SK-N-SH (cell line): ENCODE measurements at regions of chr11 and their contacts with region 1.

Region 1: DNA sequence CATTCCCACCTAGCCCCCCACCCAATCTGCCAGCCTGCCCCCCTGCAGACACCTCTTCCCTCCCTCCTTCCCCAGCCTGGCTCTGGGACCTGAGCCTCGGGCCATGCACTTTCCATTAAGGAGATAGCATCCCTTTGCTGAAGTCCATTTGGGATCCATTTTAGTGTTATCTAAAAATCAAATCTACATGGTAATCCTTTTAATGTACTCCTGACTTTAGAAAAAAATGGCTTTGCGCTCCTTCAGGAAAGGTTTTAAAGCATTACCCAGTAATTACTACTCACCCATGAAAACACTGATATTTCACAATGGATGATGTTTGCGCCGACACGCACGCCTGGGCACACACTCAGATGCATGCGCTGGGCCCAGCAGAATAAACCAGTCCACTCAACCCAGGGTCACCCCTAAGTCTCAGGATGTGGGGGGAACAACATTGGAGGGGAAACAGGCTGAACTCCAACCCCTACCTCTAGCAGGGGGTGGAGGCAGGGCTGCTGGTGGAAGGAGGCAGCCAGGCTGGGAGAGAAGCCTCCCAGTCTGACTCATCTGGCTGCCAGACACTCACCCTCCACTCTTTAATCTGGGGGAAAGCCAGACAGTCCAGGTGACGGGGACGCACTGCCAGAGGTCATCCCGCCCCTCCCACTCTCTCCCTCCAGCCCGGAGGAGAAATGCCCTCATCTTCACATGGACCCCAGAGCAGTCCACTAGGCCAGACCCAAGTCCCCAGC is 29.8 kb downstream of the LMO1 start:
- DNase-seq: peak; percentile 78
- H3K4me3 ChIP-seq: peak overlapping the region in 1 of 2 experiments; percentile 0; a peak in 1 of 4 replicates
- H3K27ac ChIP-seq: peak overlapping the region; percentile 21 to 96; a peak in 3 of 4 replicates
- H3K4me1 ChIP-seq: peaks cover 0 to 92% of the 10 kb centered on the region in 2 experiments; a peak in 2 of 4 replicates
- H3K27me3 ChIP-seq: no peaks in the 10 kb centered on the region
- CTCF ChIP-seq: no peak
- EP300 ChIP-seq: peak; percentile 8 to 98; a peak in 2 of 4 replicates
- RAD21 ChIP-seq: no peak

Region 2: GRCh38 chr11:8156877-8157276 is 77.0 kb before region 1 on chr11:
- CTCF ChIA-PET with region 1: no interaction called
- POLR2A ChIA-PET with region 1: no interaction called
- DNase-seq: no peak
- H3K4me3 ChIP-seq: no peak overlapping the region
- H3K27ac ChIP-seq: no peak overlapping the region
- H3K4me1 ChIP-seq: no peaks in the 10 kb centered on the region
- H3K27me3 ChIP-seq: no peaks in the 10 kb centered on the region
- CTCF ChIP-seq: no peak
- EP300 ChIP-seq: no peak
- RAD21 ChIP-seq: no peak

Region 3: GRCh38 chr11:8247312-8247711 is 13.5 kb after region 1 on chr11:
- CTCF ChIA-PET with region 1: interaction called, 604 read pairs
- POLR2A ChIA-PET with region 1: interaction called, 87 read pairs
- DNase-seq: no peak
- H3K4me3 ChIP-seq: no peak overlapping the region
- H3K27ac ChIP-seq: peak overlapping the region in 1 of 2 experiments; percentile 55; a peak in 1 of 4 replicates
- H3K4me1 ChIP-seq: peaks cover 0 to 75% of the 10 kb centered on the region in 2 experiments; a peak in 2 of 4 replicates
- H3K27me3 ChIP-seq: peaks cover 6% of the 10 kb centered on the region; the same call in 1 of the 2 replicates
- CTCF ChIP-seq: peak; percentile 34; the same call in 1 of the 2 replicates
- EP300 ChIP-seq: no peak
- RAD21 ChIP-seq: 0 out of 2 replicates have a peak, but pooled peaks have one; percentile 20

Region 4: DNA sequence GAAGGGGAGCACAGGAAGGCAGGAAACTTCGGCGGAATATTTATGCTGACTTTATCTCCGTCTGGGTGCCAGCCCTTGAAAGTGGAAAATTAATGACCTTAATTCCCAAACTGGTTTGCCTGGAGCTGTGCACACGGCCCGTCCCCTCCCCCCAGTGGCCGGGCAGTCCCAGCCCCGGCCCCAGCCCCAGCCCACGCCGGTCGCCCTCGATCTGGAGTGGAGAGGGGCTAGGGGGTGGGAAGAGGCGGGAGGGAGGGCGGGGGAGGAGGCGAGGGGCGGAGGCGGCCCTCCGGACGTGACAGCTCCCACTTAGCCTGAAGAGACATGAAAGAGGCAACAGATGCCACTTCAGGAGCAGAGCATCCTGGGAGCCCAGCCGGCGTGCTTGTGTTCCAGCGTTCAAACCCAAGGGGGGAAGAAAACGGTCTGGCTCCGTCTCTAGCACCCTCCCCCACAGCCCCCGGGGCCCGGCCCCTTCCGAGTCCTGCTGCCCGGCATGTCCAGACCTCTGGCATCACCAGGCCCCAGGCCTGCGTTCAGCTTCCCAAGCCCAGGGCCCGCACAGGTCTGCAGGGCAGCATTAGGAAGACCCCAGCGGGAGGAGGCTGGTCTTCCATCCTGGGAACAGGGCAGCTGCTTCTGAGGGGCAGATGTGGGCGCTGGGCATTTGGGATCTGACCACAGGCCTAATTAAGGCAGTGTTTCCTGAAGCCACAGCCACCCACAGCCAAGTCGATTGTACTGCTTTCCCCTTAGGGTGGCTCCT is 49.8 kb after region 1 on chr11:
- CTCF ChIA-PET with region 1: interaction called, 3 read pairs
- POLR2A ChIA-PET with region 1: interaction called, 19 read pairs
- DNase-seq: peak; percentile 93
- H3K4me3 ChIP-seq: peak overlapping the region in 1 of 2 experiments; percentile 5; a peak in 1 of 4 replicates
- H3K27ac ChIP-seq: peak overlapping the region in 1 of 2 experiments; percentile 98; a peak in 2 of 4 replicates
- H3K4me1 ChIP-seq: peaks cover 0 to 34% of the 10 kb centered on the region in 2 experiments; a peak in 2 of 4 replicates
- H3K27me3 ChIP-seq: no peaks in the 10 kb centered on the region; the same call in 1 of the 2 replicates
- CTCF ChIP-seq: no peak
- EP300 ChIP-seq: peak in 1 of 2 experiments; percentile 57; a peak in 1 of 4 replicates
- RAD21 ChIP-seq: no peak; the same call in 1 of the 2 replicates